H1 (cell line): ENCODE measurements at regions of chr7 and their contacts with region 1.

Region 1: GRCh38 chr7:149662591-149663095 is 110.7 kb downstream of the ZNF467 start:
- DNase-seq: peak; percentile 82 to 96
- H3K4me3 ChIP-seq: no peak overlapping the region
- H3K27ac ChIP-seq: no peak overlapping the region
- H3K4me1 ChIP-seq: peaks cover 0 to 5% (median 3%) of the 10 kb centered on the region in 4 experiments; a peak in 4 of 7 replicates
- H3K27me3 ChIP-seq: no peaks in the 10 kb centered on the region
- CTCF ChIP-seq: peak; percentile 74 to 88 (median 83)
- EP300 ChIP-seq: no peak
- POLR2A ChIP-seq: no peak
- RAD21 ChIP-seq: peak; percentile 75 to 85

Region 2: GRCh38 chr7:149605696-149606095 is 56.9 kb before region 1 on chr7:
- CTCF ChIA-PET with region 1: no interaction called
- POLR2A ChIA-PET with region 1: no interaction called
- DNase-seq: no peak
- H3K4me3 ChIP-seq: no peak overlapping the region
- H3K27ac ChIP-seq: no peak overlapping the region
- H3K4me1 ChIP-seq: no peaks in the 10 kb centered on the region
- H3K27me3 ChIP-seq: no peaks in the 10 kb centered on the region
- CTCF ChIP-seq: no peak
- EP300 ChIP-seq: no peak
- POLR2A ChIP-seq: no peak
- RAD21 ChIP-seq: no peak

Region 3: GRCh38 chr7:149642589-149642988 is 20.1 kb before region 1 on chr7:
- CTCF ChIA-PET with region 1: interaction called, 18 read pairs
- POLR2A ChIA-PET with region 1: no interaction called
- DNase-seq: no peak
- H3K4me3 ChIP-seq: no peak overlapping the region
- H3K27ac ChIP-seq: no peak overlapping the region
- H3K4me1 ChIP-seq: no peaks in the 10 kb centered on the region
- H3K27me3 ChIP-seq: no peaks in the 10 kb centered on the region; a peak in 1 of 7 replicates
- CTCF ChIP-seq: no peak
- EP300 ChIP-seq: no peak
- POLR2A ChIP-seq: no peak
- RAD21 ChIP-seq: no peak

Region 4: GRCh38 chr7:149690688-149691446 is 28.2 kb after region 1 on chr7:
- CTCF ChIA-PET with region 1: interaction called, 32 read pairs
- POLR2A ChIA-PET with region 1: no interaction called
- DNase-seq: peak; percentile 61 to 97
- H3K4me3 ChIP-seq: peak overlapping the region; percentile 27 to 62 (median 42); a peak in 6 of 8 replicates
- H3K27ac ChIP-seq: no peak overlapping the region
- H3K4me1 ChIP-seq: peaks cover 0 to 2% (median 0%) of the 10 kb centered on the region in 4 experiments; a peak in 3 of 7 replicates
- H3K27me3 ChIP-seq: no peaks in the 10 kb centered on the region
- CTCF ChIP-seq: no peak
- EP300 ChIP-seq: no peak
- POLR2A ChIP-seq: no peak
- RAD21 ChIP-seq: no peak

Region 5: GRCh38 chr7:149704507-149704906 is 41.9 kb after region 1 on chr7:
- CTCF ChIA-PET with region 1: interaction called, 44 read pairs
- POLR2A ChIA-PET with region 1: interaction called, 6 read pairs
- DNase-seq: peak in 1 of 2 experiments; percentile 31
- H3K4me3 ChIP-seq: no peak overlapping the region
- H3K27ac ChIP-seq: no peak overlapping the region
- H3K4me1 ChIP-seq: peaks cover 0 to 6% (median 2%) of the 10 kb centered on the region in 4 experiments; a peak in 2 of 7 replicates
- H3K27me3 ChIP-seq: no peaks in the 10 kb centered on the region
- CTCF ChIP-seq: no peak
- EP300 ChIP-seq: no peak
- POLR2A ChIP-seq: no peak
- RAD21 ChIP-seq: no peak

Region 6: DNA sequence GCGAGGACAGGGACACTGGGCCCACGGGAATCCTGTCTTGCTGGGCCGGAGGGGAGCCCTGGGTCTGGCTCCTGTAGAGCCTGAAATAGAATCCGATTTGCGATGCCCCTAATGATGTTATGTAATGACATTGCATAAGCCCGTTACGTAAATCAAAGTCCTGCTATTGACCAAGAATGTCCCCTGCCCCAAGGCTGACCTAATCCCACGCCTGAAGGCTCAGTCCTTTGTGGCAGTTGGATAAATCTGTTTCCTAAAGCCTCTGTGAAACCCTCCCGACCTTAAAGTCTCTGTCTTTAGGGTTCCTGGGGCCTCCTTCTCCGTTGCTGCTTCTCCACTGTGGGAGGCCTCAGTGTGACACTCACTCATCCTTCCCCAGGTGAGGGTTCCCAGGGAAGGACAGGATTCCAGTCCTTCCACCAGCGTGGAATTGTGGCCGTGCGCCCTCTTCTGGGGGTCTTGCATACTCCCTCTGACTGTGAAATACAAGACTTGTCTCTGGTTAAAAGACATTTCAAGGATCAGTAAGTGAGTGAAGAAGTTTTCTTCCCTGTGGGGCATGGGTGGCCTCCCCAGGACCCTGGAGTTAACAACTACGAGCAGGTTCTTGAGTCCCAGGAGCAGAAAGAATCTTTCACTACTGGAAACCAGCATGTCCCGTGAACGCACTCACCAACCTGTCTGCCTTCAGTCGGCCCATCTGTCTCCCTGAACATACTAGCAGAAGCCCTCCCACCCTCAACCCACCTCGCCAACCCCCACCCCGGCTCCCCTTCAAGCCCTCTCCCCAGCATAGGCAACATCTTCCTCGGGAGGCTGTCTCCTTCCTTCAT is 91.0 kb after region 1 on chr7:
- CTCF ChIA-PET with region 1: interaction called, 12 read pairs
- POLR2A ChIA-PET with region 1: no interaction called
- DNase-seq: peak in 1 of 2 experiments; percentile 83
- H3K4me3 ChIP-seq: no peak overlapping the region
- H3K27ac ChIP-seq: no peak overlapping the region
- H3K4me1 ChIP-seq: no peaks in the 10 kb centered on the region
- H3K27me3 ChIP-seq: no peaks in the 10 kb centered on the region; a peak in 1 of 7 replicates
- CTCF ChIP-seq: peak; percentile 66 to 81 (median 75)
- EP300 ChIP-seq: no peak
- POLR2A ChIP-seq: no peak
- RAD21 ChIP-seq: peak; percentile 62 to 73